ENCODE measurements at regions of chr19 and their contacts with region 1.

Region 1: DNA sequence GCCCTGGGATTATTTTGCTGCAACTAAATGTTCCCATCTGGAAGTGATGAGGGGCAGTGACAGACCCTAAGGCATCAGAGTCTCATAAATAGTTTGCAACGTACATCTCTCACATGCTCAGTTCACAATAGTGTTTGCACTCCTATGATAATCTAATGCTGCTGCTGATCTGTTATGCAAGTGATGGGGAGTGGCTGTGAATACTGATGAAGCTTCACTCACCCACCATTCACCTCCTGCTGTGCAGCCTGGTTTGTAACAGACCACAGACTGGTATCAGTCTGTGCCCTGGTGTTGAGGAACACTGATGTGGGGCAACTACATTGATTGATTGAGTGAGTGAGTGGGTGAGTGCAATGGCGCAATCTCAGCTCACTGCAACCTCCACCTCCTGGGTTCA is 54.9 kb downstream of the ZNF726 start:
- DNase-seq: no peak
- H3K4me3 ChIP-seq: no peak overlapping the region
- H3K27ac ChIP-seq: no peak overlapping the region
- H3K4me1 ChIP-seq: no peaks in the 10 kb centered on the region
- H3K27me3 ChIP-seq: no peaks in the 10 kb centered on the region
- CTCF ChIP-seq: no peak

Region 2: GRCh38 chr19:23872282-23872919 is 97.2 kb before region 1 on chr19:
- intact Hi-C with region 1: loop called (anchors 5 kb)
- DNase-seq: no peak
- H3K4me3 ChIP-seq: no peak overlapping the region
- H3K27ac ChIP-seq: no peak overlapping the region
- H3K4me1 ChIP-seq: no peaks in the 10 kb centered on the region
- H3K27me3 ChIP-seq: no peaks in the 10 kb centered on the region
- CTCF ChIP-seq: no peak

Measured in ascending aorta (tissue), 2 donors.